ENCODE measurements at regions of chr12 and their contacts with region 1.

Region 1: GRCh38 chr12:40238256-40238902 is 13.6 kb downstream of the LRRK2 start:
- DNase-seq: no peak
- ATAC-seq: no peak
- H3K4me3 Mint-ChIP-seq: no peak overlapping the region
- H3K27ac Mint-ChIP-seq: peak overlapping the region; percentile 53
- H3K4me1 Mint-ChIP-seq: peaks cover 61% of the 10 kb centered on the region
- H3K27me3 Mint-ChIP-seq: no peaks in the 10 kb centered on the region
- CTCF ChIP-seq: no peak

Region 2: GRCh38 chr12:40248585-40249297 is 10.4 kb after region 1 on chr12:
- CTCF ChIA-PET with region 1: no interaction called
- POLR2A ChIA-PET with region 1: interaction called, 4 read pairs
- intact Hi-C with region 1: loop called (anchors 1 kb)
- DNase-seq: no peak
- ATAC-seq: peak; percentile 72
- H3K4me3 Mint-ChIP-seq: peak overlapping the region; percentile 72
- H3K27ac Mint-ChIP-seq: peak overlapping the region; percentile 80
- H3K4me1 Mint-ChIP-seq: peaks cover 23% of the 10 kb centered on the region
- H3K27me3 Mint-ChIP-seq: no peaks in the 10 kb centered on the region
- CTCF ChIP-seq: no peak

Region 3: GRCh38 chr12:40253936-40254335 is 15.6 kb after region 1 on chr12:
- CTCF ChIA-PET with region 1: no interaction called
- POLR2A ChIA-PET with region 1: interaction called, 4 read pairs
- intact Hi-C with region 1: loop called (anchors 1 kb)
- DNase-seq: no peak
- ATAC-seq: no peak
- H3K4me3 Mint-ChIP-seq: no peak overlapping the region
- H3K27ac Mint-ChIP-seq: no peak overlapping the region
- H3K4me1 Mint-ChIP-seq: peaks cover 16% of the 10 kb centered on the region
- H3K27me3 Mint-ChIP-seq: no peaks in the 10 kb centered on the region
- CTCF ChIP-seq: no peak

Region 4: DNA sequence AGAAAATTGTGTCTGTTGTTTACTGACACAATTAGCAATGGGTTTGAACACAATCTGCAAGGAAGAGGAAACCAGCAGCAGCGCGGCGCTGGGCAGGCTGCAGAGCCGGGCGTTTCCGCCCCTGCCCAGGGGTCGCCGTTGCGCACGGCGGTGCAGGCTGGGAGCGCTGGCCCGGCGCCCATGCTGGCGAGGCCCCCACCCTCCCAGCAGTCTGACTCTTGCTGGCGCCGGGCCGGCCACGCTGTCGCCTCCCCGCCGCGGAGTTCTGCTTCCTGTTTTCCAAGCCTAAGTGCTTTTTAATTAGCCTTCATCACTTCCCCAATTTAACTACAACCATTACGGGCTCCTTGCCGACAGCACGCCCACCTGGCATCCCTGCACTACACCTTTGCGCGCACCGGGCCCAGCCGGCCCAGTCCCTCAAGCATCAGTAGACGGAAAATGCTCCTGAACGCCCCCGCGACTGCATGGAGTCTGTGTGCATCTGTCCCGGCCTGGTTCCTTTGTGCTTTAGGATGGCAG is 1694.2 kb after region 1 on chr12:
- CTCF ChIA-PET with region 1: no interaction called
- POLR2A ChIA-PET with region 1: no interaction called
- intact Hi-C with region 1: no loop called
- DNase-seq: peak; percentile 24
- ATAC-seq: peak; percentile 78
- H3K4me3 Mint-ChIP-seq: peak overlapping the region; percentile 80
- H3K27ac Mint-ChIP-seq: no peak overlapping the region
- H3K4me1 Mint-ChIP-seq: peaks cover 16% of the 10 kb centered on the region
- H3K27me3 Mint-ChIP-seq: peaks cover 17% of the 10 kb centered on the region
- CTCF ChIP-seq: no peak